ENCODE measurements at regions of chr5 and their contacts with region 1.

Region 1: DNA sequence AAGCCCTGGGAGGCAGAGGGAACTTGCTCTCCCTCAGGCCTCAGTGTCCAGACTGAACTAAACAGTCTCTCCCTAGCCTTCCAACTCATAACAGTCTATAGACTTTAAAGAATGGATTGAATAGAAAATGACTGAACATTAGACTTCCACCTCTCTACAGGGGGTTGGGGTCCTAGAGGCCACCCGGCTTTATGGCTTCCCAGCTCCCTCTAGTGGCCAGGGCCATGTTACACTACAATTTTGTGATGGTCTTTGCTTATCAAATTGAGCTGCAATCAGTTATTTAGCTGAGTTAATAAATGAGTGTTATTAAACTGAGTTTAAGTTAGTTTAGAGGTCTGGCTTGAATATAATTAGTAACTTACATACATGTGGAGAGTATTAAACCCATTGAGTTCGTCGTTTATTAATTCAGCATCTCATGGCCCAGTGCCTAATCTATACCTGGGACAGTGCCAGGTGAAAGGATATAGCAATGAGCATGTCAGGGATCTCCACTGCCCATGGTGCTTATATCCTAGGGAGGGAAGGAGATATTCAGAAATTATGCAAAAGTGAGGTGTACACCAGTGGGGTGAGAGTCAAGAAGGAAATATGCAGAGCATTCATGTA is 105.2 kb downstream of the SH3TC2 start:
- DNase-seq: no peak
- ATAC-seq: peak; percentile 19 to 29
- H3K4me3 ChIP-seq: no peak overlapping the region
- H3K27ac ChIP-seq: no peak overlapping the region
- H3K4me1 ChIP-seq: peaks cover 0 to 6% of the 10 kb centered on the region in 2 donors
- H3K27me3 ChIP-seq: no peaks in the 10 kb centered on the region
- CTCF ChIP-seq: peak; percentile 74 to 86 (median 79)
- POLR2A ChIP-seq: no peak

Region 2: GRCh38 chr5:148740966-148741742 is 216.5 kb before region 1 on chr5:
- in situ Hi-C with region 1: no loop called
- intact Hi-C with region 1: loop called (anchors 5 kb)
- DNase-seq: peak; percentile 73 to 77
- ATAC-seq: peak; percentile 95 to 97
- H3K4me3 ChIP-seq: peak overlapping the region in 3 of 4 donors; percentile 14 to 21 (median 15)
- H3K27ac ChIP-seq: peak overlapping the region; percentile 65 to 77 (median 73)
- H3K4me1 ChIP-seq: peaks cover 9 to 20% of the 10 kb centered on the region in 2 donors
- H3K27me3 ChIP-seq: no peaks in the 10 kb centered on the region
- CTCF ChIP-seq: peak; percentile 81 to 85 (median 83)
- POLR2A ChIP-seq: no peak

Region 3: DNA sequence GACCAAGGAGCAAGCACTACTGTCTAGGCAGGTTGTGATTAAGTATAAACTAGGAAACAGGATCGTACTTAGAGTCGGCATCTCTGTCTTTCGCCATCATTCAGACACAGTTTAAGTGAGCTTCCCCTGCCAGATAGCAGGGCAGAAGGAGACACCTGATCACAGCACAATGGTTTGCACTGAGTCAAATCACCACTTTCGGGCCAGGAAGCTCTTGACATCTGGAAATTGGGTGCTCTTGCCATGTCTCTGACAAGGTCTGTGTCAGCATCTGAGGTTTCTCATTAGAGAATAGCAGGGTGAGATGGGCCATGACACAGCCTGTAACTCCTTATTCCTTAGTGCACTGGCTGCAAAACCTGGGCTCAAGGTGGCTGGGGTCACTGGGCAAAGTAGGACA is 123.0 kb before region 1 on chr5:
- in situ Hi-C with region 1: loop called in 2 of 4 experiments (anchors 5 to 10 kb)
- intact Hi-C with region 1: no loop called
- DNase-seq: peak; percentile 61 to 74
- ATAC-seq: peak; percentile 74 to 79
- H3K4me3 ChIP-seq: no peak overlapping the region
- H3K27ac ChIP-seq: peak overlapping the region; percentile 90 to 97 (median 94)
- H3K4me1 ChIP-seq: peaks cover 78 to 79% of the 10 kb centered on the region in 2 donors
- H3K27me3 ChIP-seq: no peaks in the 10 kb centered on the region
- CTCF ChIP-seq: no peak
- POLR2A ChIP-seq: no peak

Region 4: DNA sequence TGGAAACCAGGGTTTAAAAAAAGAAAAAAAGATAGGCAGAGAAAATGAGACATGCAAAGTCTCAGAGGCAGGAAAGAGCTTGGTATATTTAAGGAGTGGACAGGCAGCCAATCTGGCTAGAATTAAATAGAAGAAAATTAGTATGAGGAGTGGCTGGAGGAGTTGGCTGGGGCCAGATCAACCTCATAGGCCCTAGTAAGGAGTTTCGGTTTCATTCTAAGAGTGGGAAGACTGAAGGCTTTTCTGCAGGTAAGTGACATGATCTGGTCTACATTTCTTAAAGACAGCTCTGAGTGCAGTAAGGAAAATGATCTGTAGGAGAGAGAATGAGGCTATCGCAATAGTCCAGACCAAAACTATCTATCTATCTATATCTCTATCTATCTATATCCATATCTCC is 103.8 kb before region 1 on chr5:
- in situ Hi-C with region 1: no loop called
- intact Hi-C with region 1: no loop called
- DNase-seq: no peak
- ATAC-seq: no peak
- H3K4me3 ChIP-seq: no peak overlapping the region
- H3K27ac ChIP-seq: peak overlapping the region; percentile 20 to 72 (median 47)
- H3K4me1 ChIP-seq: peaks cover 81 to 92% of the 10 kb centered on the region in 2 donors
- H3K27me3 ChIP-seq: no peaks in the 10 kb centered on the region
- CTCF ChIP-seq: no peak
- POLR2A ChIP-seq: no peak

Region 5: DNA sequence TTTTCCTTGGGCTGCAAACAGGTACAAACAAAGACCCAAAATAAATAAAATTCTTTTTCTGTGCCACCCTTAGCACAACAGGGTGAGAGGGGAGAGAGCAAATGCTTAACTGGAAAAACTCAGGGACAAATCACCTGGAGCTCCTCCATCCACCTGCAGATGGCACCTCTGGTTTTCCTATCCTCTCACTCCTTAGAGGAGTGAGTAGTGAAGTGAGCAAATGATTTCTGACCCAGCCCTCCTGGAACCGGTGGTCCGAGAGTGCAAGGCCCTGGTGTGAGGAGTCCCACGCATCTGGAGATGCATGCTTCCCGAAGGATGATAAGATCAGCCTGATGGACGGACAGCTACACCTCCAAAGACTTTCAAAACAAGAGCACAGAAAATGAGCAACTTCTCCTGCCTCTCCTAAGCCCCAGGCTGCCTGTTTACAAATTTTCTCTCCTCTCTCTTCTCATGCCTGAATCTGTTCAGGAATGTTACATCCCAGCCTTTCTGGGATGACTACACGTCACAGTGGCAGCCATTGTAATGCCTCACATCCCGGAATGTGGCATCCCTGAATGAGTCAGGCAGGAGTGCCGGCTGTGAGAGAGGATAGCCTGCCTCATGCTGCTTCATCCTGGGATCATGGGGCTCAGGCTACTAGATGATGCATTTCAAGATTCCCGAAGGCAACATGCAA is 44.8 kb before region 1 on chr5:
- in situ Hi-C with region 1: no loop called
- intact Hi-C with region 1: loop called (anchors 2 kb)
- DNase-seq: no peak
- ATAC-seq: peak; percentile 41 to 53
- H3K4me3 ChIP-seq: no peak overlapping the region
- H3K27ac ChIP-seq: no peak overlapping the region
- H3K4me1 ChIP-seq: peaks cover 17 to 18% of the 10 kb centered on the region in 2 donors
- H3K27me3 ChIP-seq: no peaks in the 10 kb centered on the region
- CTCF ChIP-seq: peak; percentile 16 to 58 (median 38)
- POLR2A ChIP-seq: no peak

Region 6: DNA sequence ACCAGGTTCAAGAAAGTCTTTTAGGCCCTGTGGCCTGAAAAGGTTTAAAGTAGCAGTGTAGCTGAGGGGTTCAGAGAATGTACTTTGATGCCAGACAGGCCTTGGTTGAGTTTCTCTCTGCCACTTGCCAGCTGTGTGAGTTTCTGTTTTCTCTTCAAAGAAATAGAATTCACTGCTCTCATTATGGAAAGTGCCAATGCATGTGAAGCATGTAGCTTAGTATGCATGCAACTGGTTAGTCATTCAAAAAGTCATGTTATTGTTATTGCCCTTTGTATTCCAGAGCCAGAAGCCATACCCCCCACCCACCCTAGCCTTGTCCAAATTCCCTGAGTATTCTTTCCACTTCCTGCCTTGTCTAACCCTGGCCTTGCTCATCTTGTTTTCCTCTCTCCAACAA is 29.6 kb before region 1 on chr5:
- in situ Hi-C with region 1: no loop called
- intact Hi-C with region 1: no loop called
- DNase-seq: no peak
- ATAC-seq: no peak
- H3K4me3 ChIP-seq: no peak overlapping the region
- H3K27ac ChIP-seq: peak overlapping the region; percentile 43 to 74 (median 51)
- H3K4me1 ChIP-seq: peaks cover 20 to 39% of the 10 kb centered on the region in 2 donors
- H3K27me3 ChIP-seq: no peaks in the 10 kb centered on the region
- CTCF ChIP-seq: no peak
- POLR2A ChIP-seq: no peak

Region 7: GRCh38 chr5:149860801-149861322 is 903.2 kb after region 1 on chr5:
- in situ Hi-C with region 1: no loop called
- intact Hi-C with region 1: no loop called
- DNase-seq: no peak
- ATAC-seq: no peak
- H3K4me3 ChIP-seq: no peak overlapping the region
- H3K27ac ChIP-seq: no peak overlapping the region
- H3K4me1 ChIP-seq: peaks cover 22 to 25% of the 10 kb centered on the region in 2 donors
- H3K27me3 ChIP-seq: no peaks in the 10 kb centered on the region
- CTCF ChIP-seq: no peak
- POLR2A ChIP-seq: no peak

Measured in gastrocnemius medialis (tissue), 4 donors.